PC-9 (cell line): ENCODE measurements at regions of chr2 and their contacts with region 1.

Region 1: GRCh38 chr2:62895632-62896009 is 155.0 kb upstream of the OTX1 start:
- DNase-seq: no peak
- H3K4me3 ChIP-seq: no peak overlapping the region
- H3K27ac ChIP-seq: no peak overlapping the region
- H3K4me1 ChIP-seq: no peaks in the 10 kb centered on the region
- H3K27me3 ChIP-seq: no peaks in the 10 kb centered on the region
- CTCF ChIP-seq: no peak

Region 2: GRCh38 chr2:62641410-62641843 is 254.2 kb before region 1 on chr2:
- CTCF ChIA-PET with region 1: no interaction called
- POLR2A ChIA-PET with region 1: no interaction called
- intact Hi-C with region 1: no loop called
- DNase-seq: no peak
- H3K4me3 ChIP-seq: no peak overlapping the region
- H3K27ac ChIP-seq: no peak overlapping the region
- H3K4me1 ChIP-seq: 0 out of 2 replicates have a peak, but pooled peaks cover 7% of the 10 kb centered on the region
- H3K27me3 ChIP-seq: no peaks in the 10 kb centered on the region
- CTCF ChIP-seq: no peak

Region 3: DNA sequence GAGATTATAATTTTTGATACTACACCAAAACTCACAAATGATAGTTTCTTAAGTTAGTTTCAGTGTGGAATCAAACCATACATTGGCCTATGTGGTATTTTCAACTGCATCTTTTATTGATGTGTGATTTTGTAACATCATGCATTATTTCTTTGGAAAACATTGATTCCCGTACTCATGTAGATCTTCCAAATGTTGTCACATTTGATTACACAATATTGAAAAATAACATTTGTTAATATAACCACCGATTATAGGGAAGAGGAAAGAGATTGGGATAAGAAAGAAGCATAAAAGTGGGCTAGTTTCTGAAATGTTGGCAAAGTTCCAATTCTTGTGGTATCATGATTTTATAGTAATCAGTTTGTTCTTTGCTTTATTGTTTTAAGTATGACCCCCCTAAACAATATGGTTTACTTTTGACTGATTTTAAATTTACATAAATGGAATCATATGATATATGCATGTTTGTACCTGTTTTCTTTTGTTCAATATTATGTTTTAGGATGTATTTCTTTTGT is 37.8 kb after region 1 on chr2:
- CTCF ChIA-PET with region 1: no interaction called
- POLR2A ChIA-PET with region 1: no interaction called
- intact Hi-C with region 1: loop called (anchors 1 kb)
- DNase-seq: no peak
- H3K4me3 ChIP-seq: no peak overlapping the region
- H3K27ac ChIP-seq: no peak overlapping the region
- H3K4me1 ChIP-seq: no peaks in the 10 kb centered on the region
- H3K27me3 ChIP-seq: no peaks in the 10 kb centered on the region
- CTCF ChIP-seq: no peak